Caco-2 (cell line): ENCODE measurements at regions of chr12 and their contacts with region 1.

Region 1: DNA sequence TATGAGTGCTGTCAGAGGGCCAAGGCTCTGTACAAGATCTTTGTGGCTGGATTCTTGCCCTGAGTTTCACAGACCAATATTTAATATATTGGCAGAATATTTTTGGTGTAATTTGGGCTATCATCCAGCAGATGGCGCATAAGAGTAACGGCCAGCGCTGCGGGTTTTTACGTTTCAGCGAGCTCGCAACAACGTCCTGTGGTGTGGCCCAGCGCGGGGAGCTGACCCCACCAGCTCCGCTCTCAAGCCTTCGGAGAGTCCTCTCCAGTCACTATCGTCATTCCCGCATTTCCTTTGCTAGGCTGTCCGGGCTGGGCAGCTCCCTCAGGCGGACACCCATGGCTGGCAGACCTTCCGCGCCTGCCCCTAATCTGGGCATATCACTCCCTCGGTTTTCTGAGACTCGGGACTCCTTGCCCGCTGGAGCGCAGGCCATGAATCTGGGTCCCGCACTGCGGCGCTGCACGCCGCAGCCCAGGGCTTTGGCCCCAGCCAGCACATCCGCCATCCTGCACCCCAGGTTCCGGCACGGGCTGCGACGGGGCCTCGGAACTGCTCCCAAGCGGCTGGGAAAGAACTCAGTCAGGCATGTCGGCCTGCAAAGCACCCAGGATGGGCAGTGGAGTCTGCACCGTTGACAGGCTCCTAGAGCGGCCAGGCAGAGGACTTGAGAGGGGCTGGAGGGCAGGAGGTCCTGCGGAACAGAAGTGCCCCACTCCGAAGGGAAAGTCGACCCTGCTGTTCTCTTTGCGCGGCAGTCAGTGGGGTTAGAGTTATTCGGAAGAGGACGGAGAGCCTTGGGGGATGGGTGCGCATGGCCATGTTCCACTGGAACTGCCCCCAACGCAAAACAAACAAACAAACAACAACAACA is 18.4 kb downstream of the OLR1 start:
- DNase-seq: peak; percentile 78 to 80
- H3K4me3 ChIP-seq: peak overlapping the region; percentile 31
- H3K4me3 Mint-ChIP-seq: peak overlapping the region; percentile 77
- H3K27ac Mint-ChIP-seq: peak overlapping the region; percentile 77
- H3K4me1 ChIP-seq: peaks cover 5% of the 10 kb centered on the region; the same call in 1 of the 2 replicates
- H3K4me1 Mint-ChIP-seq: peaks cover 6% of the 10 kb centered on the region
- H3K27me3 ChIP-seq: no peaks in the 10 kb centered on the region
- H3K27me3 Mint-ChIP-seq: no peaks in the 10 kb centered on the region
- CTCF ChIP-seq: peak; percentile 81 to 98

Region 2: GRCh38 chr12:10167588-10167987 is 14.1 kb after region 1 on chr12:
- CTCF ChIA-PET with region 1: interaction called, 11 read pairs
- POLR2A ChIA-PET with region 1: interaction called, 3 read pairs
- intact Hi-C with region 1: loop called (anchors 1 kb)
- DNase-seq: peak; percentile 71 to 86
- H3K4me3 ChIP-seq: no peak overlapping the region
- H3K4me3 Mint-ChIP-seq: peak overlapping the region; percentile 25
- H3K27ac Mint-ChIP-seq: peak overlapping the region; percentile 73
- H3K4me1 ChIP-seq: peaks cover 76% of the 10 kb centered on the region
- H3K4me1 Mint-ChIP-seq: peaks cover 43% of the 10 kb centered on the region
- H3K27me3 ChIP-seq: no peaks in the 10 kb centered on the region
- H3K27me3 Mint-ChIP-seq: no peaks in the 10 kb centered on the region
- CTCF ChIP-seq: no peak

Region 3: GRCh38 chr12:10175846-10176636 is 22.5 kb after region 1 on chr12:
- CTCF ChIA-PET with region 1: interaction called, 80 read pairs
- POLR2A ChIA-PET with region 1: interaction called, 5 read pairs
- intact Hi-C with region 1: loop called (anchors 1 kb)
- DNase-seq: peak; percentile 58 to 68
- H3K4me3 ChIP-seq: no peak overlapping the region
- H3K4me3 Mint-ChIP-seq: peak overlapping the region; percentile 18
- H3K27ac Mint-ChIP-seq: peak overlapping the region; percentile 77
- H3K4me1 ChIP-seq: peaks cover 91% of the 10 kb centered on the region
- H3K4me1 Mint-ChIP-seq: peaks cover 52% of the 10 kb centered on the region
- H3K27me3 ChIP-seq: no peaks in the 10 kb centered on the region
- H3K27me3 Mint-ChIP-seq: no peaks in the 10 kb centered on the region
- CTCF ChIP-seq: peak; percentile 21 to 46

Region 4: DNA sequence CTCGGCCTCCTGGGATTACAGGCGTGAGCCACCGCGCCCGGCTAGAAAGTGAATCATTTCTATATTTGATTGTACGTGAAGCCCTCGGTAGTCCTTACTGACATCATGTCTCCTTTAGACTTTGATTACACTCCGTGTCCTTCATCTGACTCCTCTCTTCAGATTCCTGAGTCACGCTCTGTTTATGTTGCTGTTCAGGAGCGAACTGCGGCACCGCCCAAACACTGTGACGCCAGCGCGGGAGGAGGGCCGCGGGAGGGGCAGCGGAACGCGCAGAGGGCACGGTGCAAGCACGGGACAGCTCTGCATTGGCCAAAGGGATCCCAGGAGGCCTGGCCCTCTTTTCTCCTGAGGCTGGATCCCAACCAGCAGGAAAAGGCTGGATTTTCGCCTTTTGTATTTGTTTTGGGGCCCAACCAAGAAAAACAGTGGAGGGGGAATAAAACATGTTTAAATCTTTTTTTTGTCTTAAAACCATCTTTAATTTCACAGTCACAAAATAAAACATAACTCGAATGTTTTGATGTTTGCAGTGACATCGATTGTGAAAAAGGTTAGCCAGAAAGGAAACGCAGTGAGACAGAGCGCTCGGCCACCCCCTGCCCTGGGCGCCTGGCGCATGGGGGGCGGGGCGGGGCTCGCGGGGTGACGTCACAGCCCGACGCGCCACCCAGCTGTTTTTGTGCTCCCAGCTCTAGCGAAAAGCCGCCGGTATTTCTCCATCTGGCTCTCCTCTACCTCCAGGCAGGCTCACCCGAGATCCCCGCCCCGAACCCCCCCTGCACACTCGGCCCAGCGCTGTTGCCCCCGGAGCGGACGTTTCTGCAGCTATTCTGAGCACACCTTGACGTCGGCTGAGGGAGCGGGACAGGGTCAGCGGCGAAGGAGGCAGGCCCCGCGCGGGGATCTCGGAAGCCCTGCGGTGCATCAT is 59.0 kb after region 1 on chr12 and contains the start of gene GABARAPL1:
- CTCF ChIA-PET with region 1: interaction called, 17 read pairs
- POLR2A ChIA-PET with region 1: interaction called, 6 read pairs
- intact Hi-C with region 1: loop called (anchors 1 kb)
- DNase-seq: peak; percentile 97 to 98
- H3K4me3 ChIP-seq: peak within 1 kb of the TSS; percentile 92
- H3K4me3 Mint-ChIP-seq: peak within 1 kb of the TSS; percentile 80
- H3K27ac Mint-ChIP-seq: peak within 1 kb of the TSS; percentile 99
- H3K4me1 ChIP-seq: peaks cover 24% of the 10 kb centered on the region
- H3K4me1 Mint-ChIP-seq: peaks cover 28% of the 10 kb centered on the region
- H3K27me3 ChIP-seq: no peaks in the 10 kb centered on the region
- H3K27me3 Mint-ChIP-seq: no peaks in the 10 kb centered on the region
- CTCF ChIP-seq: no peak
- total RNA-seq, gene GABARAPL1: 106 TPM in 2 replicates

Region 5: DNA sequence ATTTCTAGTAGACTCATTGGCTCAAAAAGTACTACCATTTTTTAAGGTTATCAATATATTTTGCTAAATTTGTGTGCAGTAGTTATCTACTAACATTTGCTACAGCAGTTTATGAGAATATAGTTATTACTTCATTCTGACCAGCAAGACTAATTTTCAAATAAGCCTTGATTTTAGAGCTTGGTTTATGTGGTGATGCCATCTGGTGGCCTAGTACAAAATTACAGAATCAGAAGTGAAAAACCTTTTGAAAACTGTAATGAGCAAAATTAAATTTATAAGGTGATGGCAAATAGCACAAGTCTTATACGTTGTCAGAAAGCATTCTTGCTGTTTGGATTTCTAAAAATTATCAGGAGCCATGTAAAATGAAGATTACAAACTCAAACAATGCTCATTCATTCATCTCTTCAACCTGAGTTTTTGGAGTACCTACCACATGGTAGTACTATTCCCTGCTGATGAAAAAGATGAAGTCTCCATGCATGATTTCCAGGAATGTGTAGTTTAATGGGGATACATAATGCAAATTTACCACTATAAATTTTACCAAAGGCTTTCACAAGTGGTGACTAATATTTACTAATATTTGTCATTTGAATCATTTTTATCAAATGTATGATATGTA is 408.9 kb after region 1 on chr12:
- CTCF ChIA-PET with region 1: no interaction called
- POLR2A ChIA-PET with region 1: no interaction called
- intact Hi-C with region 1: loop called (anchors 1 kb)
- DNase-seq: peak in 1 of 2 experiments; percentile 49
- H3K4me3 ChIP-seq: no peak overlapping the region
- H3K4me3 Mint-ChIP-seq: no peak overlapping the region
- H3K27ac Mint-ChIP-seq: no peak overlapping the region
- H3K4me1 ChIP-seq: no peaks in the 10 kb centered on the region
- H3K4me1 Mint-ChIP-seq: no peaks in the 10 kb centered on the region
- H3K27me3 ChIP-seq: no peaks in the 10 kb centered on the region
- H3K27me3 Mint-ChIP-seq: peaks cover 9% of the 10 kb centered on the region
- CTCF ChIP-seq: peak; percentile 67 to 83